ENCODE measurements at regions of chr5 and their contacts with region 1.

Region 1: GRCh38 chr5:135034236-135034962 is 371 bp upstream of the PITX1 start:
- DNase-seq: no peak
- H3K4me3 Mint-ChIP-seq: peak overlapping the region; percentile 73
- H3K27ac Mint-ChIP-seq: peak overlapping the region; percentile 87
- H3K4me1 Mint-ChIP-seq: peaks cover 34% of the 10 kb centered on the region
- H3K27me3 Mint-ChIP-seq: peaks cover 77% of the 10 kb centered on the region

Region 2: DNA sequence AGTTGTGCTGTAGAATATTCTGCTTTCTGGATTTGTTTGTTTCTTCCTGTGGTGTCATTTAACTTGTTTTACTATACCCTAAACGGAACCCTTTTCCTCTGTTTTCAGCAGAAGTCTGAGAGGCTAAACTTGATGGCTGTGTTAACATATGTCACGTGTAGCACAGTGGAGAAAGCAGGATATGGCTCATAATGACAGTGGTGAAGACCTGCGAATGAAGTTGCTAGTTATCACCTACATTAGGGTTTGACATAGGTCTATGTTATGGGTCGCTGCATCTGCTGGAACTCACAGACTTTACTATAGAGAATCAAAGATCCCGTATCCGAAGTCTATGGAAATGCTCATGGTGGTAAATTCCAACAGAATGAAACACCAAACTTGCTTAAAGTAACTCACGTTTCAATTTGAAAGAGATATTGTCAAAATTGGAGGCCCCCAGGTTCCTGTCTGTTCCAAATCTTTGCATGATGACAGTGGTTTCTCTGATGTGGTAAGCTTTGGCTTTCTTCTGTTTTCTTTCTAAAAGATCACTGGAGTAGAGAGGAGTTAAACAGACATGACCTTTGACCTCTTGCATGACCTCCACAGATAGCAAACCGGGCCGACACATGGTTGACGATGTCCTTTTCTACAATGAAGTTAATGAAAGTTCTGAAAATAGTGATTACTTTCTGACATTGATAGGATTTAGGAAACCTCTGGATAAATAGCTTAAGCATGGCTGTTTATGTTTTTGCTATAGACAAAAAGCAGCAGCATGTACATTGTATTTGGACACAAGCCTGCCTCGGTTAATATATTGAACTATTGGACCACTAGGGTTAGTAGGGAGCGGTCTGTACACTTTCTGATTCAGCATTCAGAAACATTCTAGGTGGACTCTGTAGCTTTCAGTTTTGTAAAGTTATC is 69.8 kb before region 1 on chr5:
- intact Hi-C with region 1: loop called (anchors 5 kb)
- DNase-seq: peak; percentile 14
- H3K4me3 Mint-ChIP-seq: no peak overlapping the region
- H3K27ac Mint-ChIP-seq: peak overlapping the region; percentile 65
- H3K4me1 Mint-ChIP-seq: peaks cover 28% of the 10 kb centered on the region
- H3K27me3 Mint-ChIP-seq: no peaks in the 10 kb centered on the region

Region 3: GRCh38 chr5:134989266-134989830 is 45.1 kb before region 1 on chr5:
- intact Hi-C with region 1: no loop called
- DNase-seq: no peak
- H3K4me3 Mint-ChIP-seq: no peak overlapping the region
- H3K27ac Mint-ChIP-seq: no peak overlapping the region
- H3K4me1 Mint-ChIP-seq: no peaks in the 10 kb centered on the region
- H3K27me3 Mint-ChIP-seq: peaks cover 9% of the 10 kb centered on the region

Region 4: GRCh38 chr5:135191084-135191826 is 156.9 kb after region 1 on chr5:
- intact Hi-C with region 1: loop called (anchors 5 kb)
- DNase-seq: peak; percentile 63
- H3K4me3 Mint-ChIP-seq: peak overlapping the region; percentile 59
- H3K27ac Mint-ChIP-seq: no peak overlapping the region
- H3K4me1 Mint-ChIP-seq: no peaks in the 10 kb centered on the region
- H3K27me3 Mint-ChIP-seq: peaks cover 43% of the 10 kb centered on the region

Region 5: DNA sequence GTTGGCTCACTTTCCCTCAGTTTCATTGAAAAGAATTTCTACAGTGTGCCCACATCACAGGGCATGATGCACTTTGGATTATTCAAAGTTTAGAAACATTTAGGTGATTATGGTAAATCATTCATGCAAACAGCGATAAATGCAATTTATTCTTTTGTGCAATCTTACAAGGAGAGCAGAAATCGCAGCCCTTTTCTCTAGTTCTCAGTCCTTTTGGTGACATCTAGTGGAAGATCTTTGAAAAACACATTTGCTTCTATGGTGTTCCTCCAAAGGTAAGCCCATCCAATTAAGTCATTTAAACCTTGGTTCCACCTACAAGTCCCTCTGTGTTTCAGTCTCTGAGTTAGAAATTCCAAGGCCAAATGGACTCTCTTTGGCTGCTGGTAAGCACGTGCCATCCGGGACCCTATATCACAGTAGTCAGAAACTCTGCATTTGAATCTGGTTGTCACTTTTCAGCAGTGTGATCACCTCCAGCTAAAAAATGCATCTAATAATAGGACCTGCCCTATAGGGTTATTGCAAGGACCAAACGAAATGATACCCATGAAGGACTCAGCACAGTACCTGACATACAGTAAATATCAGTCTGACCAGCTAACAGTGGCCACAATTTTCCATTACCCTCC is 298.2 kb after region 1 on chr5:
- intact Hi-C with region 1: loop called (anchors 5 kb)
- DNase-seq: no peak
- H3K4me3 Mint-ChIP-seq: no peak overlapping the region
- H3K27ac Mint-ChIP-seq: no peak overlapping the region
- H3K4me1 Mint-ChIP-seq: peaks cover 13% of the 10 kb centered on the region
- H3K27me3 Mint-ChIP-seq: no peaks in the 10 kb centered on the region

Region 6: DNA sequence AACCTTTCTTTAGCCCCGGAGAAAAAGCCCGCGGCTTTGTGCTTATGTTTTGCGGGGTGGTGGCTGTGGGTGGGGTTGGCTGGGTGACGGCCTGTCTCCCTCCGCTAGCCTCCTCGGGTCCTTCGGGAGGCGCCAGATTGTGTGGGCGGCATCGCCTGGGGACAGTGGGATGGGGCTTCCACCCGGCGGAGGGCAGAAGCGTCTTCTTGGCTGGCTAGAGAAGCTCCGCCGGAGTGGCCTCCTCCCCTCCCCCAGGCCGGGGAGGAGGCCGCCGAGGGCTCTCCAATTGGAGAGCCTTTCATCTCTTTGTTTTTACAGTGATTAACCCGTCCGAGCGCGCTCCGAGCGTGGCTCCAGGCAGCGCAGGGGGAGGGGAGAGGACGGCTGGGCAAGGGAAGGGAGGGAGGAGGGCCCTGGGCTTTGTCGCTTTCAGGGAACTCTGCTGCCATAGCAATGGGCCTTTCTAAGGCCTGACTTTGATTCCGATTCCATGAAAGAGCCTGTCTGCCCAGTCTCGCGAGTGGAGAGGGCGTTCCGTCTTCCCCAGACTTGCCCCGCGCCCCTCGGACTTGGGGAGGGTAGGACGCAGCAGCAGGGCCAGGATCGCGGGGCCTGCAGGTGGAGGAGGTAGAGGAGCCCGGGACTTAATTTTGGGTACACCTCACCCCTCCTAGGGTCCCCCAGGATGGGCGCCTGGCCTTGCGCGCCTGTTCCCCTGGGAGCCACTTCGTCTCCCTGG is 454.5 kb after region 1 on chr5:
- intact Hi-C with region 1: loop called (anchors 5 kb)
- DNase-seq: no peak
- H3K4me3 Mint-ChIP-seq: no peak overlapping the region
- H3K27ac Mint-ChIP-seq: no peak overlapping the region
- H3K4me1 Mint-ChIP-seq: peaks cover 4% of the 10 kb centered on the region
- H3K27me3 Mint-ChIP-seq: peaks cover 76% of the 10 kb centered on the region

Region 7: GRCh38 chr5:135543485-135544304 is 509.3 kb after region 1 on chr5:
- intact Hi-C with region 1: loop called (anchors 5 kb)
- DNase-seq: no peak
- H3K4me3 Mint-ChIP-seq: peak overlapping the region; percentile 87
- H3K27ac Mint-ChIP-seq: no peak overlapping the region
- H3K4me1 Mint-ChIP-seq: peaks cover 10% of the 10 kb centered on the region
- H3K27me3 Mint-ChIP-seq: peaks cover 80% of the 10 kb centered on the region

Measured in activated T-helper 1 cell treated with anti-CD3 and anti-CD28 coated beads, Interleukin-12 subunit alpha, Interleukin-12 subunit beta, Interleukin-2, Interleukin-4 antibody, amounts not matched to agents 30 ng/mL and 10 ng/mL and 1 ng/mL, durations not matched to agents 14 hours and 24 hours and 36 hours (primary cell).